Activated CD8-positive, alpha-beta memory T cell treated with anti-CD3 and anti-CD28 coated beads, Interleukin-2, amount 10 ng/mL, durations not matched to agents 7 days and 5 days (primary cell): ENCODE measurements at regions of chr1 and their contacts with region 1.

Region 1: GRCh38 chr1:110639724-110640386 is 33.7 kb upstream of the KCNA2 start:
- DNase-seq: no peak
- ATAC-seq: no peak
- H3K4me3 Mint-ChIP-seq: no peak overlapping the region
- H3K27ac Mint-ChIP-seq: peak overlapping the region; percentile 30
- H3K4me1 Mint-ChIP-seq: peaks cover 71% of the 10 kb centered on the region
- H3K27me3 Mint-ChIP-seq: no peaks in the 10 kb centered on the region

Region 2: GRCh38 chr1:110668549-110668948 is 28.7 kb after region 1 on chr1:
- CTCF ChIA-PET with region 1: interaction called, 39 read pairs
- DNase-seq: no peak
- ATAC-seq: peak; percentile 40
- H3K4me3 Mint-ChIP-seq: peak overlapping the region; percentile 77
- H3K27ac Mint-ChIP-seq: peak overlapping the region; percentile 83
- H3K4me1 Mint-ChIP-seq: peaks cover 16% of the 10 kb centered on the region
- H3K27me3 Mint-ChIP-seq: no peaks in the 10 kb centered on the region

Region 3: DNA sequence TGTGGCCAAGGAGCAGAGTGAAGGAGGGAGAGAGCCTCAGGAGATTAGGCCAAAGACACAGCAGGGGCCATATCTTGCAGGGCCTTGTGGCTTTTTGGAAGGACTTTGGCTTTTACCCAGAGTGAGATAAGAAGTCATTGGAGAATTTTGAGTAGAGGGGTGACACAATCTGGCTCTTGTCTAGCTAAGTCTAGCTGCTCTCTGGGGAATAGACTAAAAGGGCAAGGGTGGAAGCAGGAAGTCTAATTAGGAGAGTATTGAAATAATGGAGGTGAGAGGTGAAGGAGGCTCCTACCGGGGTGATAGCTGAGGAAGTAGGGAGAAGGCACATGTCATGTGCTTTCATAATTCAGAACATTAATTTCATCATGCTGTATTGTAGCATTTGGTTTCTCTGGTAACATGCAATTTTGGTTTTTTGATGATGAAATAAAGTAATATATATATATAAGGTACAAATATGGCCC is 69.2 kb after region 1 on chr1:
- CTCF ChIA-PET with region 1: no interaction called
- DNase-seq: no peak
- ATAC-seq: no peak
- H3K4me3 Mint-ChIP-seq: no peak overlapping the region
- H3K27ac Mint-ChIP-seq: no peak overlapping the region
- H3K4me1 Mint-ChIP-seq: peaks cover 22% of the 10 kb centered on the region
- H3K27me3 Mint-ChIP-seq: no peaks in the 10 kb centered on the region